Transverse colon (tissue), 4 donors: ENCODE measurements at regions of chr17 and their contacts with region 1.

Region 1: DNA sequence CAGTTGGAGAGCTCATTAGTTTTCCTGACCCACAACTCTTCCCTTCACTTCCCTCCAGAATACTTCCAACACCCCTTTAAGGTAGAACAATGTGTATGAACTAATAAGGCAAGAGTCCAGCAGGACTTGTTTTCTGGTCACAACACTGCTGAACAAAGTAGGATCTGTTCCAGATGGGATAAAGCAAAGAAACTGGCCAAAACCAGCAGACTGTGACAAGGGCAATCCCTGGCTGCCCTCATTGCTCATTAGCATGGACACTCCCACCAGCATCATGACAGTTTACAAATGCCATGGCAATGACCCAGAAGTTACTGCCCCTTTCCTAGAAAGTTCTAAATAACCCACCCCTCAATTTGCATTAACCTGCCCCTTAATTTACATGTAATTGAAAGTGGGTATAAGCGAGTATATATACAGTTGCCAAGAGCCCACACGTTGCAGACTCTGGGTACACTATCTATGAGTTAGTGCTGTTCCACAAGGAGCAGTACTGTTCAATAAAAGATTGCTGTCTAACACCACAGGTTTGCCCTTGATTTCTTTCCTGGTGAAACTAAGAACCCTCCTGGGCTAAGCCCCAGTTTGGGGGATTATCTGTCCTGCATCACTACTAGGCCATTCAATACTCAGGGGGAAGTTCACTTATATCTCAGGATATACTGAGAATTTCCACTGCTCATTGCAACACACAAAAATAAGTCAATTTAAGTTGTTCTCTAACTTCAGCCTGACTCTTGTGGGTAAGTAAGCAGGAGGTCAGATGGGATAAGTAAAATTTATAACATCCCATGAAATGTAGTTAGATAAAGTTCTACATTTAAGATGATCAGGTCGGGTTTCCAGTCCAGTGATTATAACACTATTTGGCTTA is 82.3 kb downstream of the SSH2 start:
- DNase-seq: no peak
- H3K4me3 ChIP-seq: no peak overlapping the region
- H3K27ac ChIP-seq: no peak overlapping the region
- H3K4me1 ChIP-seq: peaks cover 0 to 19% (median 8%) of the 10 kb centered on the region in 4 donors
- H3K27me3 ChIP-seq: no peaks in the 10 kb centered on the region
- CTCF ChIP-seq: no peak
- EP300 ChIP-seq: no peak
- POLR2A ChIP-seq: no peak

Region 2: GRCh38 chr17:29821897-29822296 is 25.9 kb before region 1 on chr17:
- in situ Hi-C with region 1: no loop called
- intact Hi-C with region 1: loop called (anchors 1 kb)
- DNase-seq: no peak
- H3K4me3 ChIP-seq: no peak overlapping the region
- H3K27ac ChIP-seq: no peak overlapping the region
- H3K4me1 ChIP-seq: peaks cover 0 to 38% (median 14%) of the 10 kb centered on the region in 4 donors
- H3K27me3 ChIP-seq: no peaks in the 10 kb centered on the region
- CTCF ChIP-seq: no peak
- EP300 ChIP-seq: no peak
- POLR2A ChIP-seq: no peak

Region 3: DNA sequence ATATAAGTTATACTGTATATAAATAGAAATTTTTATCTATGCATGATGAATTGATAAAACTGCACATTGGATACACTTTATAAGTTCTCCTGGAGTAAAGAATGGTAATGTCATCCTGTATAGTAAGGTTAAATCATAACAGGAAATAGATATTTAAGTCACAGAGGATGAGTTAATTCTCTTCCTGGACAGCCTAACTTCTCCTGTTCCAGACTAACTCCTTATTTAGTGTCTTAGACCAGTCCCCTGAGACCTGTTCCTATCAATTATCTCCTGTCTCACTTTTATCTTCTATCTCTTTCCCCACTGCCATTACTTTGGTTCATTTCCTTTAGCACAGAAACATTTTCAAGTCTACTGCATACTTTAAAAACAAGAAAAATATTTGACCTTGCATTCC is 35.7 kb after region 1 on chr17:
- in situ Hi-C with region 1: no loop called
- intact Hi-C with region 1: no loop called
- DNase-seq: no peak
- H3K4me3 ChIP-seq: no peak overlapping the region
- H3K27ac ChIP-seq: no peak overlapping the region
- H3K4me1 ChIP-seq: peaks cover 0 to 4% (median 0%) of the 10 kb centered on the region in 4 donors
- H3K27me3 ChIP-seq: no peaks in the 10 kb centered on the region
- CTCF ChIP-seq: no peak
- EP300 ChIP-seq: no peak
- POLR2A ChIP-seq: no peak